IMR-90 (cell line): ENCODE measurements at regions of chr7 and their contacts with region 1.

Region 1: GRCh38 chr7:150778738-150779301 is 21.3 kb downstream of the TMEM176B start:
- DNase-seq: peak; percentile 66
- ATAC-seq: peak; percentile 76
- H3K4me3 ChIP-seq: no peak overlapping the region
- H3K27ac ChIP-seq: no peak overlapping the region
- H3K4me1 ChIP-seq: peaks cover 16% of the 10 kb centered on the region
- H3K27me3 ChIP-seq: no peaks in the 10 kb centered on the region
- CTCF ChIP-seq: peak; percentile 87
- POLR2A ChIP-seq: no peak
- RAD21 ChIP-seq: peak; percentile 76

Region 2: GRCh38 chr7:150716368-150716767 is 62.5 kb before region 1 on chr7 and contains the start of gene GIMAP1:
- CTCF ChIA-PET with region 1: no interaction called
- POLR2A ChIA-PET with region 1: no interaction called
- dilution Hi-C with region 1: no loop called
- in situ Hi-C with region 1: no loop called
- intact Hi-C with region 1: no loop called
- DNase-seq: no peak
- ATAC-seq: no peak
- H3K4me3 ChIP-seq: no peak within 1 kb of the TSS
- H3K27ac ChIP-seq: no peak within 1 kb of the TSS
- H3K4me1 ChIP-seq: no peaks in the 10 kb centered on the region
- H3K27me3 ChIP-seq: no peaks in the 10 kb centered on the region
- CTCF ChIP-seq: no peak
- POLR2A ChIP-seq: no peak
- RAD21 ChIP-seq: no peak
- total RNA-seq, gene GIMAP1: not detected in 2 replicates

Region 3: DNA sequence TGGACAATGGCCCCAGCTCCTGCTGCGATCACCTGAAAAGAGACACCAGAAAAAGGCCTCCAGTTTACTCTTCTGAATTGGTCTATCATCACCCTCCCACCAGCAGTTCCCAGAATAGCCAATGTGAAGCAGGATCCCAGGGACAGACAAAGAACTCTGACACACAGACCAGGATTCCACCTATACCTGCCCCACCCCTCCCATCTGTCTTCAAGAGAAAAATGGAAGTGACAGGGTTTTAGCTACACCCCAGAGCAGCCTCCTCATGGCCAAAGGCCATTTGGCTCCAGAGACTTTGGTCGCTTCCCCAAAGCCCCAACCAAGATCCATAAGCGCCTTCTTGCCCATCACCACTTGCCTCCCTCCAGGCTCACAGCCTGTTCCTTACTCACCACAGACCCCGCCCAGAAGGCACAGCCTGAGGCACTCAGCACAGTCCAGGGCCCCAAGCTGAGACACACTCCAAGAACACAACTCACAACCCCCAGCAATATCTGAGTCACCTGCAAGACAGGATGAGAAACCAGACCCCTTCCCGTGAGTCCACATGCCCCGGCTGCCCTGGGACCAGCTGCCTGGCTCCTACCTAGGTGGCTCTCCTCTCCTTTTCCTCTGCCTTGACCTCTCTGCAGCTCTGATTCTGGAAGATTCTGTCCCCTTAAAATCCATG is 14.9 kb after region 1 on chr7:
- CTCF ChIA-PET with region 1: no interaction called
- POLR2A ChIA-PET with region 1: no interaction called
- dilution Hi-C with region 1: no loop called
- in situ Hi-C with region 1: no loop called
- intact Hi-C with region 1: no loop called
- DNase-seq: no peak
- ATAC-seq: peak; percentile 16; the same call in 1 of the 2 replicates
- H3K4me3 ChIP-seq: no peak overlapping the region
- H3K27ac ChIP-seq: no peak overlapping the region
- H3K4me1 ChIP-seq: peaks cover 5% of the 10 kb centered on the region; the same call in 1 of the 2 replicates
- H3K27me3 ChIP-seq: no peaks in the 10 kb centered on the region
- CTCF ChIP-seq: no peak
- POLR2A ChIP-seq: no peak
- RAD21 ChIP-seq: no peak

Region 4: GRCh38 chr7:150876817-150877526 is 98.2 kb after region 1 on chr7:
- CTCF ChIA-PET with region 1: interaction called, 11 read pairs
- POLR2A ChIA-PET with region 1: no interaction called
- dilution Hi-C with region 1: no loop called
- in situ Hi-C with region 1: no loop called
- intact Hi-C with region 1: loop called (anchors 1 kb)
- DNase-seq: peak; percentile 64
- ATAC-seq: peak; percentile 78
- H3K4me3 ChIP-seq: no peak overlapping the region
- H3K27ac ChIP-seq: peak overlapping the region; percentile 77; the same call in 1 of the 2 replicates
- H3K4me1 ChIP-seq: peaks cover 6% of the 10 kb centered on the region; the same call in 1 of the 2 replicates
- H3K27me3 ChIP-seq: no peaks in the 10 kb centered on the region
- CTCF ChIP-seq: peak; percentile 55
- POLR2A ChIP-seq: no peak
- RAD21 ChIP-seq: peak; percentile 38

Region 5: DNA sequence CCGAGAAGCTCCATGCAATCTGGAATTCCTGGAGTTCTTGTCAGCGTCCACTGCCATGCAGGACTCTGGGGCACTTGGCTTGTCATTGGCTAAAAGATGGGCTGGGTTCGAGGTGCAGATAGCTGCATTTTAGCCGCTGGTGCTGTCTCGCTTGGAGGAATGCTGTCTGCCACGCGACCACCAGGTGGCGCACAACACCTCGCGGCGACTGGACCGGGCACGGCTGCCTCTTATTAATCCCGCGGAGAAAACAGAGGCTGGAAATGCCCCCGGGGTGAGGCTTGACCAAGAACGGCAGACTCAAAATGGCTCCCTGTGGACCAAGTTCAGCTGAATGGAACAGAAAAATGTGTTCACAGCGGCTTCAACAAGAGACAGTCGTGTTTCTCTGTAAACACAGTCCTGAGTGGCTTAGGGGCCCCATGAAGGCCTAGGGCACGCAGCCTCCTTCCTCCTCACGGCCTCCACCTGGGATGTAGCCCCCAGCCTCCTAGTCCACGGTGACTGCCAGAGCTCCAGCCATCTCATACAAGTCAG is 119.7 kb after region 1 on chr7:
- CTCF ChIA-PET with region 1: interaction called, 5 read pairs
- POLR2A ChIA-PET with region 1: no interaction called
- dilution Hi-C with region 1: no loop called
- in situ Hi-C with region 1: no loop called
- intact Hi-C with region 1: loop called (anchors 1 kb)
- DNase-seq: peak; percentile 48
- ATAC-seq: peak; percentile 86
- H3K4me3 ChIP-seq: no peak overlapping the region
- H3K27ac ChIP-seq: no peak overlapping the region
- H3K4me1 ChIP-seq: peaks cover 6% of the 10 kb centered on the region; the same call in 1 of the 2 replicates
- H3K27me3 ChIP-seq: peaks cover 15% of the 10 kb centered on the region; the same call in 1 of the 2 replicates
- CTCF ChIP-seq: peak; percentile 91
- POLR2A ChIP-seq: no peak
- RAD21 ChIP-seq: peak; percentile 83

Region 6: GRCh38 chr7:150962553-150963399 is 184.0 kb after region 1 on chr7:
- CTCF ChIA-PET with region 1: interaction called, 3 read pairs
- POLR2A ChIA-PET with region 1: no interaction called
- dilution Hi-C with region 1: no loop called
- in situ Hi-C with region 1: no loop called
- intact Hi-C with region 1: loop called (anchors 1 kb)
- DNase-seq: peak; percentile 37
- ATAC-seq: peak; percentile 91
- H3K4me3 ChIP-seq: no peak overlapping the region
- H3K27ac ChIP-seq: peak overlapping the region; percentile 79
- H3K4me1 ChIP-seq: peaks cover 13% of the 10 kb centered on the region; the same call in 1 of the 2 replicates
- H3K27me3 ChIP-seq: no peaks in the 10 kb centered on the region; the same call in 1 of the 2 replicates
- CTCF ChIP-seq: peak; percentile 90
- POLR2A ChIP-seq: no peak
- RAD21 ChIP-seq: peak; percentile 90

Region 7: GRCh38 chr7:150988230-150989226 is 209.7 kb after region 1 on chr7:
- CTCF ChIA-PET with region 1: interaction called, 3 read pairs
- POLR2A ChIA-PET with region 1: no interaction called
- dilution Hi-C with region 1: no loop called
- in situ Hi-C with region 1: loop called (anchors 5 kb)
- intact Hi-C with region 1: loop called (anchors 1 kb)
- DNase-seq: no peak
- ATAC-seq: peak; percentile 77
- H3K4me3 ChIP-seq: no peak overlapping the region
- H3K27ac ChIP-seq: no peak overlapping the region
- H3K4me1 ChIP-seq: no peaks in the 10 kb centered on the region; the same call in 1 of the 2 replicates
- H3K27me3 ChIP-seq: peaks cover 6% of the 10 kb centered on the region; the same call in 1 of the 2 replicates
- CTCF ChIP-seq: peak; percentile 73
- POLR2A ChIP-seq: no peak
- RAD21 ChIP-seq: peak; percentile 76

Region 8: DNA sequence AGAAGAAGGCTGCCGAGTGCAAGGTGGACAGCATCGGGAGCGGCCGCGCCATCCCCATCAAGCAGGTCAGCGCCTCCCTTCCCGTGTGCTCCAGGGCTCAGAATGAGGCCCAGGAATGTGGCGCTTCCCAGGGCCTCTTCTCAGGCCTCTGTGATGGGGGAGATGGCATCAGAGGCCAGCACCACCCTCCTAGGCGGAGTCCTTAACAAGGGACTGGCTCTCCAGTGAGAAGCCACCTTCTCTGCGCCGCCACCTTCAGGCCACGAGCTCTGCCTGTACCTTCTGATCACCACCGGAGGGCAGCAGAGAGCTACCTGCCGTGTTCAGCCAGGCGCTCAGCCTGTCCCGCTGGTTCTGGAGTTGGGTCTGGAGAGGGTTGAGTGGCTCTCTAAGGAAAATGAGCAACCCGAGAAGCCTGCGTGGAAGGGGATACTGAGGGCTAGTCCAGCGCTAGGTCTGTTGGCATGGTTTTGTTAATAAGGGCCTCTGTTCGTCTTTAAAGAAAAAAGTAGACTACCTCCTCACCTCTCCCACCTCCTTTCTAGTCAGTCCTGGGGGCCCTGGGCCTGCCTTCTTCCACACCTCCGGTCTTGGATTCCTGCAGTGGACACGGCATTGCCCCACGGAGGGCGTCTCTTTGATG is 345.1 kb after region 1 on chr7:
- CTCF ChIA-PET with region 1: no interaction called
- POLR2A ChIA-PET with region 1: no interaction called
- dilution Hi-C with region 1: no loop called
- in situ Hi-C with region 1: loop called (anchors 25 kb)
- intact Hi-C with region 1: no loop called
- DNase-seq: peak; percentile 75
- ATAC-seq: peak; percentile 96
- H3K4me3 ChIP-seq: no peak overlapping the region
- H3K27ac ChIP-seq: no peak overlapping the region
- H3K4me1 ChIP-seq: no peaks in the 10 kb centered on the region
- H3K27me3 ChIP-seq: no peaks in the 10 kb centered on the region
- CTCF ChIP-seq: peak; percentile 98
- POLR2A ChIP-seq: no peak
- RAD21 ChIP-seq: peak; percentile 86